Head of caudate nucleus (tissue), 42 donors: ENCODE measurements at regions of chr22 and their contacts with region 1.

Region 1: GRCh38 chr22:29306175-29306834 is at the start of gene GAS2L1:
- DNase-seq: peak; percentile 56 to 91 (median 80)

Region 2: DNA sequence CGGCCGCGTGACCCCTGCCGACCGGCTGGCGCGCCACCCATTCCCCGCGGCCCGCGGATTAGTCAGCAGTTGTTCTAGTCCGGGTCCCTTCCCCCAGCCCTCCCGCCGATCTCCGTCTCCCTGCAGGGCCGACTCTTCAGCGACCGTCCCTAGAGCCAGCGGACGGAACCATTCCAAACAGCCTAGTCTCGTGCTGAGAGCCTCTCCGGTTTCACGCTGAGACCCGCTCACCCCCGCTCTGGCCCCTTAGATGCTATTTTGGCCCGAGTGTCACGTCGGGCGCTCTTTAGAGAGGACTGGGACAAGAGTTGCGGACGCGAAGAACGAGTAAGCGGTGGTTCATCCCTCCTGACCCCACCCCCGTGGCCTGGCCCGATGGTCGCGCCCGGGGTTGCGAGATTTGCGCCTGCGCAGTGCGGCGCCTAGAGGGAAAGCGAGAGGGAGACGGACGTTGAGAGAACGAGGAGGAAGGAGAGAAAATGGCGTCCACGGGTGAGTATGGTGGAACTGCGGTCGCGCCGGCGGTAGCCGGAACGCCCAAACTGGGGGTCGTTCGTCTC is 38.4 kb before region 1 on chr22 and contains the starts of genes EWSR1 and RHBDD3:
- intact Hi-C with region 1: loop called (anchors 5 kb)
- DNase-seq: peak; percentile 88 to 99 (median 96)

Region 3: DNA sequence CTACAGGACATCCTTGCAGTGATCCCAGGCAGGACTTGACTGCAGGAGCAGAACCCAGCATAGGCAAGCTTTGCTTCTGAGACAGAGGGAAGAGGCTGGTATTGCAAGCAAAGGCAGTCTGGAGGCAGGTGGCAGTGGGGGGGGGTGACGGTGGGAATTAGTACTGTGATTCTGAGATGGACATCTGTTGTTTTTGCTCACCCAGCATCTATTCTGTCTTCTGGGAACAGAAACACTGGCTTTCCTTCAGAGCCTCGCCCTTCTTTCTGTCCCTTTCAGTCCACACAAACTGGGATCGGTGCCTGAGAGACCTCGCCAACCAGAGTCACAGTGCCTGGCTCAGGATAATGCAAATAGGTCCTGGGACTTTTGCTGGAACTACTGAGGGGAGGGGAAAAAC is 40.4 kb after region 1 on chr22:
- intact Hi-C with region 1: loop called (anchors 5 kb)
- DNase-seq: peak in 29 of 42 donors; percentile 29 to 83 (median 60)